ENCODE measurements at regions of chr4 and their contacts with region 1.

Region 1: DNA sequence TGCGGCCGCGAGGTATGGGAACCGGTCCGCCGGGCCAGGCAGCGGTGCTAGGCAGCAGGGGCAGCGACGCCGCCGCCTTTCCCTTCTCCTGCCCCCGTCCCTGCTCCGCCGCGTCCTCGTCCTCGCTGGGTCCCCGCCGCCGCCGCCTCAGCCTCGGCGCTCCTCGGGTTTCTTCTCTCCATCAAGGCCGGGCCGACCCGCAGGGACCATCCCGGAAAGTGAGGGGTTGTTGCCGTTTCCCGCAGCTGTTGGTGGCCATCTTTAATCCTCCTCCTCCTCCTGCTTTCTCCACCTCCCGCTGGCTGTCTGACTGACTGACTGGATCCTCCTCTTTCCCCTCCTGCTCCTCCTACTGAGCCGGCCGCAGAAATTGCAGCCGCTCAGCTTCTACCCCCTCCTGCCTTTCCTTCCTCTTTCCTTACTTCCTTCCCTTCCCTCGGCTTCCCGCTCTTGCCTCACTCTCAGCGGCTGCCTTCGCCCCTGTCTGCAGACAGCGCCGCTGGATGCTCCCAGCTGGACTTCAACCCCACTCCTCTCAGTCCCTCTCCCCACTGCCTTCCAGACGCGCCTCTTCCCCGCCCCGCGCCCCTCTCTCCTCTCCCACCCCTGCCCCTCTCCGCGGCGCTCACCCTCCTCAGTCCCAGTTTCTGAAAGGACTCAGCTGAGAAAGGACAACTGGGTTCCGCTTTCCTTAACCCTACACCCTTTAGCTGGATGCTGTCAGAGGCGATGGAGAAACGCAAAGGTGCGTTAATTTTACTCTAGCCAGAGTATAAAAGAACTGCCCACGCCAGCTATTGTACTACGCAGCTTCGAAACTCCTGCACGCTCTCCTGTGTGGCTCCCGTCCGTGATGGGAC is at the start of gene WDFY3:
- DNase-seq: peak; percentile 85
- H3K4me3 ChIP-seq: peak within 1 kb of the TSS; percentile 65 to 95 (median 78)
- H3K27ac ChIP-seq: peak within 1 kb of the TSS; percentile 40
- H3K4me1 ChIP-seq: peaks cover 7% of the 10 kb centered on the region
- H3K27me3 ChIP-seq: no peaks in the 10 kb centered on the region
- CTCF ChIP-seq: peak in 1 of 2 donors; percentile 10
- POLR2A ChIP-seq: peak; percentile 88
- total RNA-seq, gene WDFY3: 89.7 and 113 TPM in 2 replicates

Region 2: DNA sequence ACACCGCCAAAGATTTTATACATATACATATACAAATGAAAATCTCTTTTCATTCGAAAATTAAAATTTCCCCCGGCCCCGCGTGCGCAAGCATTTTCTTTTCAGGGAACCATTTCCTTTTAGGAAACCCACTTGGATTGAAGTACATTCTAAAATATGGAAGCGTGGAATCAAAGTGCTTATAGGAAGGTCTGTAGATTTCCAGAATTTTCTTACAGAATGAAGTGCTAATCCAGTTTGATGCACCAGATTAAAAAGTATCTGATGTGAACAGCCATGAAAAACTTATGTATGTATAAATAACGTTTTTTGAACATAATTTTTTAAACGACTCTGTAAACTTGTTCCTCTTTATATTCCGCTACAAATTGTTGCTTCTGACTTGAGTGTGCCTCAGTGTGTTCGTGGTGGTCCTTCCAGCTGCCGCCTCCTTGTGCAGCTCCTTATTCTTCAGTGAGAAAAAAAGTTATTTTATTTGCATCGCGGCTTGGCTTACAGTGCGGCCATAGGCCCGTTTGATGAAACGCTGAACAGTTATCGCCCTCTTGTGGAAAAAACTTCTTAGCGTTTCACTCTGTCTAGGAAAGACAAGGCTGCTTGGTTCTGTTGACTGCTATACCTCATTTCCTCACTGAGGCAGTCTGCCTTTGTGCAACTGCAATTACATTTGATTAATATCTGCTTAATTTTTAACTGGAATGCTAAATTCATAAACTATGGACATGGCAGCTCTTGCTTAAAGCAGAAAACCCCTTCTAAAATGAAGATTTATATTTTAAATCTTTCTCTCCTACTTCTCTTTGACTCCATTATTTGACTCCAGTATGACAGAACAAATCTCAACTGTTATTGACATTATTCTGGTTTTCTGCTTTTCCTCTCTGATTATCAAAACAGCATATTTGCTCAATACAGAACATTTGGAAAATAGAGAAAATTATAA is 462.8 kb before region 1 on chr4:
- CTCF ChIA-PET with region 1: interaction called, 3 read pairs
- POLR2A ChIA-PET with region 1: no interaction called
- dilution Hi-C with region 1: no loop called
- intact Hi-C with region 1: loop called (anchors 10 kb)
- DNase-seq: peak; percentile 67
- H3K4me3 ChIP-seq: no peak overlapping the region
- H3K27ac ChIP-seq: no peak overlapping the region
- H3K4me1 ChIP-seq: peaks cover 3% of the 10 kb centered on the region
- H3K27me3 ChIP-seq: peaks cover 48 to 77% of the 10 kb centered on the region in 2 experiments
- CTCF ChIP-seq: peak; percentile 61 to 76
- POLR2A ChIP-seq: no peak

Region 3: GRCh38 chr4:84691170-84691691 is 275.4 kb before region 1 on chr4:
- CTCF ChIA-PET with region 1: interaction called, 6 read pairs
- POLR2A ChIA-PET with region 1: no interaction called
- dilution Hi-C with region 1: no loop called
- intact Hi-C with region 1: loop called (anchors 2 kb)
- DNase-seq: peak; percentile 76
- H3K4me3 ChIP-seq: no peak overlapping the region
- H3K27ac ChIP-seq: peak overlapping the region; percentile 43
- H3K4me1 ChIP-seq: peaks cover 34% of the 10 kb centered on the region
- H3K27me3 ChIP-seq: no peaks in the 10 kb centered on the region
- CTCF ChIP-seq: no peak
- POLR2A ChIP-seq: no peak

Region 4: GRCh38 chr4:84750253-84750959 is 216.2 kb before region 1 on chr4:
- CTCF ChIA-PET with region 1: interaction called, 86 read pairs
- POLR2A ChIA-PET with region 1: no interaction called
- dilution Hi-C with region 1: no loop called
- intact Hi-C with region 1: loop called (anchors 1 kb)
- DNase-seq: peak; percentile 64
- H3K4me3 ChIP-seq: no peak overlapping the region
- H3K27ac ChIP-seq: no peak overlapping the region
- H3K4me1 ChIP-seq: no peaks in the 10 kb centered on the region
- H3K27me3 ChIP-seq: no peaks in the 10 kb centered on the region
- CTCF ChIP-seq: peak; percentile 32 to 35
- POLR2A ChIP-seq: no peak

Region 5: GRCh38 chr4:84870398-84871163 is 96.0 kb before region 1 on chr4:
- CTCF ChIA-PET with region 1: interaction called, 3 read pairs
- POLR2A ChIA-PET with region 1: no interaction called
- dilution Hi-C with region 1: no loop called
- intact Hi-C with region 1: loop called (anchors 1 kb)
- DNase-seq: peak; percentile 94
- H3K4me3 ChIP-seq: peak overlapping the region in 2 of 3 experiments; percentile 67 to 92
- H3K27ac ChIP-seq: peak overlapping the region; percentile 94
- H3K4me1 ChIP-seq: peaks cover 33% of the 10 kb centered on the region
- H3K27me3 ChIP-seq: no peaks in the 10 kb centered on the region
- CTCF ChIP-seq: no peak
- POLR2A ChIP-seq: peak; percentile 68

Region 6: DNA sequence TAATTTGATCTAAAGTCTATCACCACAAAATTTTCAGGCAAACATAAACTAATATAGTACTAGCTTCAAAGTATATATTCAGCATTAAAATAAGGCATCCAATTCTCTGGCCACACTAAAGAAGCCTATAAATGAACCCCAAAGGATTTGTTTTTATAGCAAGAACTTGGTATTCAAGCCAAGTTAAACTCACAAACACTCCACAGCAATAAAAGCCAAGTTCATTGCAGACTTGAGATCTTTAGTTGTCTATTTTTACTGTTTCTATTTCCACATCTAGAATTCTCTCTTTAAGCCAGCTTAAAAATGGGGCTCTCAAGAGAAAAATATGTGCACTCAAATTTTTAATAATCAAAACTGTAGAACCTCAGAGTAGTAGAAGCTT is 51.2 kb before region 1 on chr4:
- CTCF ChIA-PET with region 1: no interaction called
- POLR2A ChIA-PET with region 1: no interaction called
- dilution Hi-C with region 1: no loop called
- intact Hi-C with region 1: loop called (anchors 5 kb)
- DNase-seq: peak; percentile 21
- H3K4me3 ChIP-seq: no peak overlapping the region
- H3K27ac ChIP-seq: no peak overlapping the region
- H3K4me1 ChIP-seq: peaks cover 36% of the 10 kb centered on the region
- H3K27me3 ChIP-seq: no peaks in the 10 kb centered on the region
- CTCF ChIP-seq: no peak
- POLR2A ChIP-seq: no peak

Measured in endothelial cell of umbilical vein (primary cell).